ENCODE measurements at regions of chr22 and their contacts with region 1.

Region 1: GRCh38 chr22:36486619-36487384 is 5.4 kb upstream of the TXN2 start:
- DNase-seq: peak; percentile 77
- ATAC-seq: no peak
- H3K4me3 ChIP-seq: no peak overlapping the region
- H3K4me3 Mint-ChIP-seq: no peak overlapping the region
- H3K27ac ChIP-seq: no peak overlapping the region
- H3K27ac Mint-ChIP-seq: peak overlapping the region; percentile 38
- H3K4me1 ChIP-seq: peaks cover 11 to 14% of the 10 kb centered on the region in 2 donors
- H3K4me1 Mint-ChIP-seq: peaks cover 12% of the 10 kb centered on the region
- H3K27me3 ChIP-seq: no peaks in the 10 kb centered on the region
- H3K27me3 Mint-ChIP-seq: no peaks in the 10 kb centered on the region
- CTCF ChIP-seq: peak; percentile 74

Region 2: DNA sequence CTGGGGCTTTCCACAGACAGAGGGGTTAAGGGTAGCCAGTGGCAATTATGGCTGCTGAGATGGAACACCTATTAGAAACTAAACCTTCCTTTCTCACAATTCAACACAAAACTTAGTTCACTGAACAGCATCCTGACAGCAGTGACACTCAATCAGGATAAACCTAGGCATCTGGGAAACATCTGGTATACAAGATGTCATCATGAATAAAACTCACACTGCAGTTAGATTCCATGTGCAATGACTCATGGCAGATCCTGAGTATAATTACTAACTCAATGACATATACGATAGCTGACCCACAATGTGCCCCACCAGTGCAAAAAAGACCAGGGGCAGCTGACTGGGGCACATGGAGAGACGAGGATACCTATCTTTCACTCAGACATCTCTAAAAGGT is 475.9 kb before region 1 on chr22:
- CTCF ChIA-PET with region 1: no interaction called
- POLR2A ChIA-PET with region 1: no interaction called
- intact Hi-C with region 1: no loop called
- DNase-seq: no peak
- ATAC-seq: no peak
- H3K4me3 ChIP-seq: no peak overlapping the region
- H3K4me3 Mint-ChIP-seq: no peak overlapping the region
- H3K27ac ChIP-seq: no peak overlapping the region
- H3K27ac Mint-ChIP-seq: no peak overlapping the region
- H3K4me1 ChIP-seq: no peaks in the 10 kb centered on the region
- H3K4me1 Mint-ChIP-seq: no peaks in the 10 kb centered on the region
- H3K27me3 ChIP-seq: peaks cover 0 to 46% (median 36%) of the 10 kb centered on the region in 4 experiments
- H3K27me3 Mint-ChIP-seq: peaks cover 65% of the 10 kb centered on the region
- CTCF ChIP-seq: no peak

Region 3: GRCh38 chr22:36156515-36157419 is 330.0 kb before region 1 on chr22:
- CTCF ChIA-PET with region 1: interaction called, 10 read pairs
- POLR2A ChIA-PET with region 1: no interaction called
- intact Hi-C with region 1: no loop called
- DNase-seq: peak; percentile 69
- ATAC-seq: peak; percentile 59
- H3K4me3 ChIP-seq: peak overlapping the region; percentile 42 to 60 (median 55)
- H3K4me3 Mint-ChIP-seq: peak overlapping the region; percentile 94
- H3K27ac ChIP-seq: peak overlapping the region; percentile 72 to 92
- H3K27ac Mint-ChIP-seq: peak overlapping the region; percentile 93
- H3K4me1 ChIP-seq: peaks cover 53 to 69% of the 10 kb centered on the region in 2 donors
- H3K4me1 Mint-ChIP-seq: peaks cover 78% of the 10 kb centered on the region
- H3K27me3 ChIP-seq: no peaks in the 10 kb centered on the region
- H3K27me3 Mint-ChIP-seq: no peaks in the 10 kb centered on the region
- CTCF ChIP-seq: no peak

Region 4: DNA sequence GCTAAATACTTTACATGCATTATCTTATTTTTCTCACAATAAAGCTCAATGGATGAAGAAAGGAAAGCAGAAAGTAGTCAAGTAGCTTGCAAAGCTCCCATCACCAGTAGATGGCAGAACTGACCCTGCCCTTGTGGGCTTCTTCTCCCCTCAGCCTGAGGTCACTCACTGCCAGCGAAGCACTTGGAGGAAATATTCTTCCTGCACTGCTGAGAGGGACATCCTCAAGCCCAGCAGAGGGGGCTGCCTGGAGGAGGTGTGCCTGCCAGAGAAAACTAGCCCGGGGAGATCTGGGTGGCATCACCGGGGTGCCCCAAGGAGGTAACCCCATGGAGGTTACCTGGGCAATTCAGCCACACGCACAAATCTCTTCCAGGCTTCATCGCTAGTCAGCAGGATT is 291.8 kb before region 1 on chr22:
- CTCF ChIA-PET with region 1: interaction called, 19 read pairs
- POLR2A ChIA-PET with region 1: no interaction called
- intact Hi-C with region 1: no loop called
- DNase-seq: peak; percentile 47
- ATAC-seq: peak; percentile 49
- H3K4me3 ChIP-seq: no peak overlapping the region
- H3K4me3 Mint-ChIP-seq: no peak overlapping the region
- H3K27ac ChIP-seq: no peak overlapping the region
- H3K27ac Mint-ChIP-seq: no peak overlapping the region
- H3K4me1 ChIP-seq: peaks cover 7 to 16% of the 10 kb centered on the region in 2 donors
- H3K4me1 Mint-ChIP-seq: peaks cover 19% of the 10 kb centered on the region
- H3K27me3 ChIP-seq: peaks cover 0 to 13% (median 0%) of the 10 kb centered on the region in 4 experiments
- H3K27me3 Mint-ChIP-seq: peaks cover 13% of the 10 kb centered on the region
- CTCF ChIP-seq: peak; percentile 58

Region 5: DNA sequence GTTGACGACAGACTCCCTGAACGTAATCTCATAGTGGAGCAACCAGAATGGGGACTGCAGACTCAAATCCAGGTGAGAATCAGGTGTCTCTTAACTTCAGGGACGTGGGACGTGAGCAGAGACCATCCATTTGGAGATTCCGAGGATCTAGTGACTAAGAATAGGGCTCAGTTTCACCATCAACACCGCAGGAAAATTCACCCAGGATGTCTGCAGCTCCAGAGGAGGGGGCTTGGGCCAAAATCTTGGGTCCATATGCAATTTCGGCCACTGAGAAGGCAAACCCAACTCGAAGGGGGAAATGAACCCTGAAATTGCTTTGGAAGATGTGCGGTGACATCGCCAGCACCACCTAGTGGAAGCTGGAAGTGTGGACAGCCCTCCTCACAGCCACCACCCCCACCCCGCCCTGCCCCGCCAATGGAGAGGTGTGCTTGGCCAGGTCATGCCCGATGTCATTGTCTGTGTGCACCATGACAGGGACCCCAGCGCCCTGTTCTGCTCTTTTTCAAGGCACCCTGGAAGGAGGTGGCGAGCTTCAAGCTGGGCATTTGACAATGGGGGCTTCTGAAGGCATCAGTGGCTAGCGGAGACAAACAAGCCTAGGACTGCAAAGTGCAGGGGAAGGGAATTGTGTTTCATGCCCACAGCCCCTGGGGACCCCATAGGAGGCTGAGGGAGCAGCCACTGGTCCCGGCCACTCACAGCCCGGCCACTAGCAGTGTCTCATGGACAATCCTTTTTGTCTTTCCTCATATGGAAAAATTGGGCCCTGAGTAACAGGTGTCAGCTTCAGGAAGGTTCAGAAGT is 209.1 kb before region 1 on chr22:
- CTCF ChIA-PET with region 1: interaction called, 12 read pairs
- POLR2A ChIA-PET with region 1: no interaction called
- intact Hi-C with region 1: no loop called
- DNase-seq: peak; percentile 82
- ATAC-seq: peak; percentile 95
- H3K4me3 ChIP-seq: no peak overlapping the region
- H3K4me3 Mint-ChIP-seq: no peak overlapping the region
- H3K27ac ChIP-seq: no peak overlapping the region
- H3K27ac Mint-ChIP-seq: peak overlapping the region; percentile 38
- H3K4me1 ChIP-seq: peaks cover 9 to 13% of the 10 kb centered on the region in 2 donors
- H3K4me1 Mint-ChIP-seq: peaks cover 14% of the 10 kb centered on the region
- H3K27me3 ChIP-seq: no peaks in the 10 kb centered on the region
- H3K27me3 Mint-ChIP-seq: no peaks in the 10 kb centered on the region
- CTCF ChIP-seq: peak; percentile 87

Region 6: GRCh38 chr22:36331306-36331911 is 155.4 kb before region 1 on chr22:
- CTCF ChIA-PET with region 1: interaction called, 13 read pairs
- POLR2A ChIA-PET with region 1: interaction called, 8 read pairs
- intact Hi-C with region 1: no loop called
- DNase-seq: peak; percentile 87
- ATAC-seq: peak; percentile 66
- H3K4me3 ChIP-seq: peak overlapping the region in 4 of 5 experiments; percentile 14 to 58 (median 30)
- H3K4me3 Mint-ChIP-seq: peak overlapping the region; percentile 84
- H3K27ac ChIP-seq: peak overlapping the region; percentile 83 to 86
- H3K27ac Mint-ChIP-seq: peak overlapping the region; percentile 97
- H3K4me1 ChIP-seq: peaks cover 78 to 90% of the 10 kb centered on the region in 2 donors
- H3K4me1 Mint-ChIP-seq: peaks cover 89% of the 10 kb centered on the region
- H3K27me3 ChIP-seq: no peaks in the 10 kb centered on the region
- H3K27me3 Mint-ChIP-seq: no peaks in the 10 kb centered on the region
- CTCF ChIP-seq: no peak